ENCODE measurements at regions of chr5 and their contacts with region 1.

Region 1: GRCh38 chr5:148740966-148741742 is 85.3 kb upstream of the ADRB2 start:
- DNase-seq: no peak
- ATAC-seq: no peak
- H3K4me3 Mint-ChIP-seq: no peak overlapping the region
- H3K27ac Mint-ChIP-seq: no peak overlapping the region
- H3K4me1 Mint-ChIP-seq: peaks cover 10% of the 10 kb centered on the region
- H3K27me3 Mint-ChIP-seq: no peaks in the 10 kb centered on the region
- CTCF ChIP-seq: peak; percentile 55

Region 2: DNA sequence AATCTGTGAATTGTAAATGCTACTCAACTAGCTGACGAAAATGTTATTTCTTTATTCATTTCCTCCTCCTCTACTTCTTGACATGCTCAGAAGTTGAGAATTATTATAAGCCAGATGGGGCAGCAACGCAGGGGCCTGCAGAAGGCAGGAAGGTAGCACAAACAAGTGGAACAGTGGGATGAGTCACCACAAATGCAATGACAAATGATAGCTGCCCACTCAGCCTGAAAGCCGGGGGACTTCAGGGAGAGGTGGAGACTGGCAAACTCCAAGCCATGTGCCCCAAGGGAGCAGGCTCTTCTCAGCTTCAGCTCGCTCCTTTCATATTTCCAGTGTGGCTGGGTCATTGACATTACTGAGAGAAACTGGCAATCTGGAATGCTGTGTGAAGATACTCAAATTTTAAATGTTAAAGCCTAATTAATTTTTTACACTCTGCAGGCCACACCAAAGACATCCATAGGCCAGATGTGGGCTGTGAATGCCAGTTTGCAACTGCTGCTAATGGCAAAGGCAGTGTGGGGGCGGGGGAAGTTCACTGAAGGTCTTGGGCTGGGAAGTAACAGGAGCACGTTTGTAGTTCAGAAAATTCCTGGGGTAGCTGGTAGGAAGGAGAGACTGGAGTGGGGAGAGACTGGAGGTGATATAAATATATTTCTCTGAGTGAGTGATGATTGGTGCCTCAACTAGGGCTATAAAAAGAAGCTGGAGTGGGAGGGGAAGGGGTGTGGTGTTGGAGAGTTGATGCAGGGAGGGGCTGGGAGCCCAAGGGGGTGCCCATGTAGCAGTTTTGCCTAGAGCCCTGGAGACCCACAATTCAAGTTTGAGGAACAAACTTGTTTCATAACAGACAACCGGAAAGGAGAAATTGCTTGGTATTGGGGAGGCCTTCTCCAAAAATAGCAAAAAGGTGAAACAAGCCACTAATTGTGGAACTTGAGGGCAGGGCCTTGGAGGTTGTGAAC is 64.5 kb after region 1 on chr5:
- CTCF ChIA-PET with region 1: interaction called, 7 read pairs
- POLR2A ChIA-PET with region 1: interaction called, 3 read pairs
- intact Hi-C with region 1: loop called (anchors 2 kb)
- DNase-seq: no peak
- ATAC-seq: peak; percentile 28
- H3K4me3 Mint-ChIP-seq: peak overlapping the region; percentile 47
- H3K27ac Mint-ChIP-seq: peak overlapping the region; percentile 88
- H3K4me1 Mint-ChIP-seq: peaks cover 66% of the 10 kb centered on the region
- H3K27me3 Mint-ChIP-seq: no peaks in the 10 kb centered on the region
- CTCF ChIP-seq: no peak

Region 3: DNA sequence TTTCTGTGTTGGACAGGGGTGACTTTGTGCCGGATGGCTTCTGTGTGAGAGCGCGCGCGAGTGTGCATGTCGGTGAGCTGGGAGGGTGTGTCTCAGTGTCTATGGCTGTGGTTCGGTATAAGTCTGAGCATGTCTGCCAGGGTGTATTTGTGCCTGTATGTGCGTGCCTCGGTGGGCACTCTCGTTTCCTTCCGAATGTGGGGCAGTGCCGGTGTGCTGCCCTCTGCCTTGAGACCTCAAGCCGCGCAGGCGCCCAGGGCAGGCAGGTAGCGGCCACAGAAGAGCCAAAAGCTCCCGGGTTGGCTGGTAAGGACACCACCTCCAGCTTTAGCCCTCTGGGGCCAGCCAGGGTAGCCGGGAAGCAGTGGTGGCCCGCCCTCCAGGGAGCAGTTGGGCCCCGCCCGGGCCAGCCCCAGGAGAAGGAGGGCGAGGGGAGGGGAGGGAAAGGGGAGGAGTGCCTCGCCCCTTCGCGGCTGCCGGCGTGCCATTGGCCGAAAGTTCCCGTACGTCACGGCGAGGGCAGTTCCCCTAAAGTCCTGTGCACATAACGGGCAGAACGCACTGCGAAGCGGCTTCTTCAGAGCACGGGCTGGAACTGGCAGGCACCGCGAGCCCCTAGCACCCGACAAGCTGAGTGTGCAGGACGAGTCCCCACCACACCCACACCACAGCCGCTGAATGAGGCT is 85.0 kb after region 1 on chr5 and contains the start of gene ADRB2:
- CTCF ChIA-PET with region 1: interaction called, 14 read pairs
- POLR2A ChIA-PET with region 1: interaction called, 4 read pairs
- intact Hi-C with region 1: loop called (anchors 1 kb)
- DNase-seq: peak; percentile 84
- ATAC-seq: peak; percentile 89
- H3K4me3 Mint-ChIP-seq: peak within 1 kb of the TSS; percentile 89
- H3K27ac Mint-ChIP-seq: peak within 1 kb of the TSS; percentile 98
- H3K4me1 Mint-ChIP-seq: peaks cover 75% of the 10 kb centered on the region
- H3K27me3 Mint-ChIP-seq: no peaks in the 10 kb centered on the region
- CTCF ChIP-seq: no peak
- total RNA-seq, gene ADRB2: 3.2 TPM in 2 replicates

Region 4: DNA sequence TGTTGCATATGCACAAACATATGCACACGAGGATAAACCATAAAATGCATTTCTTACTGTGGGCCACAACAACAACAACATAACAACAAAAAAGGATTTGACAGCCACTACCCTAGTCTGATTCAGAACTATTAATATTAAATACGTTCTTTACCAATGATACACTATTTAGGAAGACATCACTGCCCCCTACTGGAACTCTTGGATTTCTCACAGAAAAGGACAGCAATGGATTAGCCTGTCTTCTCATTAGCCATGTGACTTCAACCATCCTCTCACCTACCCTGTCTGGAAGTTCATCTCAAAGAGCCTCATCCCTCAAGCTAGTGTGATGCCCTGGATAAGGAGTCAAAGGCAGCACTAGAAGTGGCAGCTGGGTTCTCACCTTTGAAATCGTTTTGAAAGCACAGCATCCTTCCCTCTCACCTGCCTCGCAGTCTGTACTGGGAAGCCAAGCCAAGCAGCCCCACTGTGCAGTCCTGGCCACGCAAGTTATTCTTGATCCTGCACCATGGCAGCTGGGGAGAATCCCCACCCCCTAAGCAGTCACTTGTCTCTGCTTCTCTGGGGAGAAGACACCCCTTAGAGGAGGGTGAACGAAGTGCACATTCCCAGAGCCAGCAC is 257.1 kb after region 1 on chr5:
- CTCF ChIA-PET with region 1: interaction called, 86 read pairs
- POLR2A ChIA-PET with region 1: no interaction called
- intact Hi-C with region 1: loop called (anchors 1 kb)
- DNase-seq: no peak
- ATAC-seq: peak; percentile 52
- H3K4me3 Mint-ChIP-seq: no peak overlapping the region
- H3K27ac Mint-ChIP-seq: no peak overlapping the region
- H3K4me1 Mint-ChIP-seq: no peaks in the 10 kb centered on the region
- H3K27me3 Mint-ChIP-seq: peaks cover 23% of the 10 kb centered on the region
- CTCF ChIP-seq: no peak